ENCODE measurements at regions of chr11 and their contacts with region 1.

Region 1: GRCh38 chr11:95790123-95790932 is at the start of gene CEP57:
- DNase-seq: peak; percentile 84
- ATAC-seq: peak; percentile 64
- H3K4me3 Mint-ChIP-seq: peak within 1 kb of the TSS; percentile 100
- H3K27ac Mint-ChIP-seq: peak within 1 kb of the TSS; percentile 100
- H3K4me1 Mint-ChIP-seq: peaks cover 47% of the 10 kb centered on the region
- H3K27me3 Mint-ChIP-seq: no peaks in the 10 kb centered on the region
- CTCF ChIP-seq: no peak
- total RNA-seq, gene CEP57: 52.6 and 53.7 TPM in 2 replicates

Region 2: GRCh38 chr11:94493281-94494125 is 1296.8 kb before region 1 on chr11 and contains the starts of genes ANKRD49 and MRE11:
- CTCF ChIA-PET with region 1: no interaction called
- POLR2A ChIA-PET with region 1: interaction called, 5 read pairs
- intact Hi-C with region 1: loop called (anchors 1 kb)
- DNase-seq: peak; percentile 94
- ATAC-seq: peak; percentile 99
- H3K4me3 Mint-ChIP-seq: peak within 1 kb of the TSS; percentile 93
- H3K27ac Mint-ChIP-seq: peak within 1 kb of the TSS; percentile 92
- H3K4me1 Mint-ChIP-seq: peaks cover 39% of the 10 kb centered on the region
- H3K27me3 Mint-ChIP-seq: no peaks in the 10 kb centered on the region
- CTCF ChIP-seq: no peak
- total RNA-seq, gene ANKRD49: 39.5 and 46.5 TPM in 2 replicates
- total RNA-seq, gene MRE11: 39.7 and 40.1 TPM in 2 replicates

Region 3: GRCh38 chr11:95089620-95090542 is 700.4 kb before region 1 on chr11 and contains the start of gene ENDOD1:
- CTCF ChIA-PET with region 1: interaction called, 3 read pairs
- POLR2A ChIA-PET with region 1: interaction called, 8 read pairs
- intact Hi-C with region 1: loop called (anchors 1 kb)
- DNase-seq: peak; percentile 88
- ATAC-seq: peak; percentile 93
- H3K4me3 Mint-ChIP-seq: peak within 1 kb of the TSS; percentile 92
- H3K27ac Mint-ChIP-seq: peak within 1 kb of the TSS; percentile 94
- H3K4me1 Mint-ChIP-seq: peaks cover 56% of the 10 kb centered on the region
- H3K27me3 Mint-ChIP-seq: no peaks in the 10 kb centered on the region
- CTCF ChIP-seq: no peak
- total RNA-seq, gene ENDOD1: 9.5 and 9.8 TPM in 2 replicates

Region 4: GRCh38 chr11:95254131-95254704 is 536.1 kb before region 1 on chr11:
- CTCF ChIA-PET with region 1: no interaction called
- POLR2A ChIA-PET with region 1: interaction called, 10 read pairs
- intact Hi-C with region 1: no loop called
- DNase-seq: peak; percentile 54
- ATAC-seq: peak; percentile 94
- H3K4me3 Mint-ChIP-seq: peak overlapping the region; percentile 75
- H3K27ac Mint-ChIP-seq: peak overlapping the region; percentile 91
- H3K4me1 Mint-ChIP-seq: peaks cover 81% of the 10 kb centered on the region
- H3K27me3 Mint-ChIP-seq: no peaks in the 10 kb centered on the region
- CTCF ChIP-seq: no peak

Region 5: GRCh38 chr11:95715777-95716241 is 74.5 kb before region 1 on chr11:
- CTCF ChIA-PET with region 1: no interaction called
- POLR2A ChIA-PET with region 1: interaction called, 22 read pairs
- intact Hi-C with region 1: loop called (anchors 1 kb)
- DNase-seq: peak; percentile 39
- ATAC-seq: peak; percentile 78
- H3K4me3 Mint-ChIP-seq: peak overlapping the region; percentile 75
- H3K27ac Mint-ChIP-seq: peak overlapping the region; percentile 95
- H3K4me1 Mint-ChIP-seq: peaks cover 92% of the 10 kb centered on the region
- H3K27me3 Mint-ChIP-seq: no peaks in the 10 kb centered on the region
- CTCF ChIP-seq: no peak

Region 6: GRCh38 chr11:95829580-95830259 is 39.4 kb after region 1 on chr11:
- CTCF ChIA-PET with region 1: no interaction called
- POLR2A ChIA-PET with region 1: no interaction called
- intact Hi-C with region 1: no loop called
- DNase-seq: no peak
- ATAC-seq: no peak
- H3K4me3 Mint-ChIP-seq: no peak overlapping the region
- H3K27ac Mint-ChIP-seq: peak overlapping the region; percentile 5
- H3K4me1 Mint-ChIP-seq: peaks cover 2% of the 10 kb centered on the region
- H3K27me3 Mint-ChIP-seq: no peaks in the 10 kb centered on the region
- CTCF ChIP-seq: no peak

Region 7: GRCh38 chr11:95877291-95877690 is 87.0 kb after region 1 on chr11:
- CTCF ChIA-PET with region 1: no interaction called
- POLR2A ChIA-PET with region 1: no interaction called
- intact Hi-C with region 1: no loop called
- DNase-seq: no peak
- ATAC-seq: no peak
- H3K4me3 Mint-ChIP-seq: no peak overlapping the region
- H3K27ac Mint-ChIP-seq: no peak overlapping the region
- H3K4me1 Mint-ChIP-seq: no peaks in the 10 kb centered on the region
- H3K27me3 Mint-ChIP-seq: no peaks in the 10 kb centered on the region
- CTCF ChIP-seq: no peak

Region 8: DNA sequence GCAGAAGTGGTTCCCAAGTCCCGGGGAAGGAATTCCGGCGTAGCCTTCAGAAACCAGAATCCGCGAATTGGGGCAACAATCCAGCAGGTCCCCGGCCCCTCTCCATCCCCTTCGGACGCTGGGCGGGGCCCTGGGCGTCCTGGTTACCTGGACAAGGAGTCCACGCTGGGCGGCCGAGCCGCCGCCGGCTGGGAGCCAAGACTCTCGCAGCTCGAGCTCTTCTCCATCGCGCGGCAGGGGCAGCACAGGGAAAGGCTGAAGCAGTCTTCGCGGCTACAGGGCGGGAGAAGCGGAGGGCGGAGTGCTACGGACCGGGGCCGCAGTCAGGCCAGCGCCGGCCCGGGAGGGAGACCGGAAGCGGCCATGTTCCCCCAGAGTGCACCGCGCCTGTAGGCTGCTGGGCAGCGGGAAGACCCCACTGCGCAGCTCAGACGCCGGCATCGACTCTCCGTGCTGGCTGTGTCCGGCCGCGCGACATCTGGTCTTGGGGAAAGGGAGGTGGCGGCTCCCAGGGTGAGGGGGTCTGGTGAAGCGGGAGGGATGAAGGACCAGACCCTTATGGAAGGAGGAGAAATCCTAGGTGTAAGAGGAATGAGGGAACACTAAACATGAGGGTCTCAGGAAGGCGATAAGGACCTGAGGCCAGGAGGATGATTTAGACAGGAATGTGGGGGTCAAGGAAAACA is 133.5 kb after region 1 on chr11 and contains the start of gene MTMR2:
- CTCF ChIA-PET with region 1: no interaction called
- POLR2A ChIA-PET with region 1: no interaction called
- intact Hi-C with region 1: loop called (anchors 5 kb)
- DNase-seq: peak; percentile 60
- ATAC-seq: peak; percentile 98
- H3K4me3 Mint-ChIP-seq: peak within 1 kb of the TSS; percentile 100
- H3K27ac Mint-ChIP-seq: peak within 1 kb of the TSS; percentile 98
- H3K4me1 Mint-ChIP-seq: peaks cover 29% of the 10 kb centered on the region
- H3K27me3 Mint-ChIP-seq: peaks cover 9% of the 10 kb centered on the region
- CTCF ChIP-seq: no peak
- total RNA-seq, gene MTMR2: 22.6 and 25.1 TPM in 2 replicates

Region 9: GRCh38 chr11:96242971-96243647 is 452.8 kb after region 1 on chr11:
- CTCF ChIA-PET with region 1: no interaction called
- POLR2A ChIA-PET with region 1: no interaction called
- intact Hi-C with region 1: loop called (anchors 5 kb)
- DNase-seq: peak; percentile 51
- ATAC-seq: peak; percentile 87
- H3K4me3 Mint-ChIP-seq: peak overlapping the region; percentile 90
- H3K27ac Mint-ChIP-seq: peak overlapping the region; percentile 95
- H3K4me1 Mint-ChIP-seq: peaks cover 53% of the 10 kb centered on the region
- H3K27me3 Mint-ChIP-seq: no peaks in the 10 kb centered on the region
- CTCF ChIP-seq: no peak

Measured in activated B cell treated with CpG ODN at 0.5 μM for 24 hours (primary cell).